ENCODE measurements at regions of chr15 and their contacts with region 1.

Region 1: DNA sequence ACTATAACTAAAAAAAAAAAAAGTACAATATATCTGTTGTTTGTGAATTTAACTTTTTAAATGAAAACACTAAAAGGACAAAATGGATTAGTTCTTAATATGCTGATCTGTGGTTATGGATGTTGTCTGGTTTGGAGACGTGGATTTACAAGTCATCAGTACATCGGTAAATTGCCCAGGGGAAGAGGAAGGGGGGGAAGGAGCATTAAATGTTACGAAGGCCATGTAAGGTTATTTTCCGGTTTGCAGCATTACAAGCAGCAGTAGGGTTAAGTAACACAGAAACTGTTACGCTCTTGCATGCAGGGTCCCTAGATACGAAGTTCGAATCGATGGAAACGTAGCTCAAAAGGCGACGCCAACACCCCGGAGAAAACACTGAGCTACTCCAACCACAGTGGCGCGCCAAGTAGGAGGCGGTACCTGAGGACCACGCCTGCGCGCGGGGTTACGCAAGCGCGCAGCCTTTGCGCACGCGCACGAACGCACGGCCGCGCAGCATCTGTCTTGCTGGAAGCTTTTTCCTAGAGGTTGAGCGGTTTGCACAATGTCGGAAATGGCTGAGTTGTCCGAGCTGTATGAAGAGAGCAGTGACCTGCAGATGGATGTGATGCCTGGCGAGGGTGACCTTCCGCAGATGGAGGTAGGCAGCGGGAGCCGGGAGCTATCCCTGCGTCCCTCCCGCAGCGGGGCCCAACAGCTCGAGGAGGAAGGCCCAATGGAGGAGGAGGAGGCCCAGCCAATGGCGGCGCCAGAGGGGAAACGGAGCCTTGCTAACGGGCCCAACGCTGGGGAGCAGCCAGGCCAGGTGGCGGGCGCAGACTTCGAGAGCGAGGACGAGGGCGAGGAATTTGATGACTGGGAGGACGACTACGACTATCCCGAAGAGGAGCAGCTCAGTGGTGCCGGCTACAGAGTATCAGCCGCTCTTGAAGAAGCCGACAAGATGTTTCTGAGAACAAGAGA is at the start of gene EID1:
- DNase-seq: peak; percentile 92
- H3K4me3 Mint-ChIP-seq: peak within 1 kb of the TSS; percentile 96
- H3K27ac Mint-ChIP-seq: peak within 1 kb of the TSS; percentile 94
- H3K4me1 Mint-ChIP-seq: peaks cover 11% of the 10 kb centered on the region
- H3K27me3 Mint-ChIP-seq: no peaks in the 10 kb centered on the region
- CTCF ChIP-seq: no peak
- total RNA-seq, gene EID1: 91.3 and 110 TPM in 2 replicates

Region 2: DNA sequence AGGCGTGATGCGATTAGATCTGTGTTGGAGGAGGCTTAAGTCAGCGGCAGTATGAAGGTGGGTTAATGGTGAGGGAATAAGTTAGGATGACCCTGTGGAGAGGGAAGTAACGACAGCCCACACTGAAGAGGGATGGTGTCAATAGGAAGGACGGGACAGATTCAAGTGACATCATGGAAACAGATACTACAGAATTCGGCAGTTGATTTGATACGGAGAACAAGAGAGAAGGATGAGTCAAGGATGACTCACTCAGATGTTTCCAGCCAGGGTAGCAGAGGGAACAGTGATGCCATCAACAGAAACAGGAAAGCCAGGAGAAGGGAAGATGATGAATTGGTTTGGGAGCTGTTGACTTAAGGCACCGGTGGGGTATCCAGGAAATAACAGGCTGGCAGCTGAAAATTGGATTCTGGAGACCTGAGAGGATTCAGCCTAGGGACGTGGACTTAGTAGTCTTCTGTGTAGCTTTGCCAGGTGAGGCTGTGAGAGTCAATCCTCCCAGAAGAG is 47.9 kb after region 1 on chr15:
- CTCF ChIA-PET with region 1: no interaction called
- POLR2A ChIA-PET with region 1: interaction called, 7 read pairs
- intact Hi-C with region 1: loop called (anchors 5 kb)
- DNase-seq: peak; percentile 87
- H3K4me3 Mint-ChIP-seq: no peak overlapping the region
- H3K27ac Mint-ChIP-seq: no peak overlapping the region
- H3K4me1 Mint-ChIP-seq: peaks cover 12% of the 10 kb centered on the region
- H3K27me3 Mint-ChIP-seq: no peaks in the 10 kb centered on the region
- CTCF ChIP-seq: no peak

Region 3: GRCh38 chr15:48963524-48964113 is 85.7 kb after region 1 on chr15 and contains the start of gene SHC4:
- CTCF ChIA-PET with region 1: interaction called, 9 read pairs
- POLR2A ChIA-PET with region 1: interaction called, 29 read pairs
- intact Hi-C with region 1: loop called (anchors 1 kb)
- DNase-seq: peak; percentile 81
- H3K4me3 Mint-ChIP-seq: peak within 1 kb of the TSS; percentile 76
- H3K27ac Mint-ChIP-seq: no peak within 1 kb of the TSS
- H3K4me1 Mint-ChIP-seq: peaks cover 5% of the 10 kb centered on the region
- H3K27me3 Mint-ChIP-seq: no peaks in the 10 kb centered on the region
- CTCF ChIP-seq: peak; percentile 31
- total RNA-seq, gene SHC4: 0.26 and 0.49 TPM in 2 replicates

Region 4: DNA sequence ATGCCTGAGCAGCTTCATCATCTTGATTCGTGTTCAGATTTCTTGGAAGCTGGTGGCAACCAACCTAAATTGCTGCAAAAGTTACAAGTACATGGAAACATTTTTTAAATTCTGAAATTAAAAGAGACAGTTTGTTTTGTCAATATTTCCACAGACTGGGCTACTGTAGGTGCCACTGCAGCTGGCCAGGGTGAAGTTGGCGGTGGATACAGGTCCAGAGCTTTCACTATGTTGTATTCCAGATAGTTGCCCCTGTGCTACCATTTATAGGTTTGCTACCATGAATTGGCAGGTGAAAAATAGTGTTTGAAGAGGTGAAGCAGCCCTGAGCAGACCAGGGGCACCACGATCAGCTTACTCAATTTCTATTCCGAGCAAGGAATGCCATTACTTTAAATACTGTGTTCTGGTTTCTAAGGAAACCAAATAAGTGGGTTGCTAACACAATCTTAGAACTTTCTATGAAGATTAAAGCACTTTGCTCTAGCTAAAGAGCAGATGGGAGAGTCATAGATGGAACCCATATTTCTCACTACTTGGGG is 107.0 kb after region 1 on chr15:
- CTCF ChIA-PET with region 1: no interaction called
- POLR2A ChIA-PET with region 1: interaction called, 11 read pairs
- intact Hi-C with region 1: no loop called
- DNase-seq: no peak
- H3K4me3 Mint-ChIP-seq: no peak overlapping the region
- H3K27ac Mint-ChIP-seq: no peak overlapping the region
- H3K4me1 Mint-ChIP-seq: peaks cover 6% of the 10 kb centered on the region
- H3K27me3 Mint-ChIP-seq: no peaks in the 10 kb centered on the region
- CTCF ChIP-seq: no peak

Region 5: GRCh38 chr15:49155110-49155833 is 277.4 kb after region 1 on chr15 and contains the start of gene COPS2:
- CTCF ChIA-PET with region 1: no interaction called
- POLR2A ChIA-PET with region 1: interaction called, 12 read pairs
- intact Hi-C with region 1: no loop called
- DNase-seq: peak; percentile 98
- H3K4me3 Mint-ChIP-seq: peak within 1 kb of the TSS; percentile 98
- H3K27ac Mint-ChIP-seq: peak within 1 kb of the TSS; percentile 94
- H3K4me1 Mint-ChIP-seq: peaks cover 29% of the 10 kb centered on the region
- H3K27me3 Mint-ChIP-seq: no peaks in the 10 kb centered on the region
- CTCF ChIP-seq: no peak
- total RNA-seq, gene COPS2: 123 and 132 TPM in 2 replicates

Region 6: GRCh38 chr15:49343546-49343945 is 465.6 kb after region 1 on chr15:
- CTCF ChIA-PET with region 1: no interaction called
- POLR2A ChIA-PET with region 1: no interaction called
- intact Hi-C with region 1: no loop called
- DNase-seq: no peak
- H3K4me3 Mint-ChIP-seq: no peak overlapping the region
- H3K27ac Mint-ChIP-seq: no peak overlapping the region
- H3K4me1 Mint-ChIP-seq: no peaks in the 10 kb centered on the region
- H3K27me3 Mint-ChIP-seq: no peaks in the 10 kb centered on the region
- CTCF ChIP-seq: no peak